ENCODE measurements at regions of chr18 and their contacts with region 1.

Region 1: DNA sequence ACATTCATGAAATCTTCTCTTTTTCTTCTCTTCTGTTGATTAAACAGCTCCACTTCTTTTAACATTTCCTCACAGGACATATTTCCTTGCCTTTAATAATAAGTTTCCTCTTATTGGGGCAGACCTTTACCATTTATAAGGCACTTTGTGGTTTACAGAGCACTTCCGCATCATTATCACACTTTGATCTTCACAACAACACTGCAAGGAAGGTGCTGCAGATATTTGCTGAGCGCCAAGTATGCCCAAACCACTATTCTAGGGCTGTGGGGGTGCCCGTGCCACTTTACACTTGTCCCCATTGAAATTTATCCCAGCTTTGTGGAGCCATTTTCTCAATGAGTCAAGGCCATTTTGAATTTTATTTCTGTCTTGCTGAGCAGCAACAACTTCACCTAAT is 246.6 kb downstream of the SS18 start:
- DNase-seq: no peak
- H3K4me3 ChIP-seq: no peak overlapping the region
- H3K27ac ChIP-seq: no peak overlapping the region
- H3K4me1 ChIP-seq: no peaks in the 10 kb centered on the region
- H3K27me3 ChIP-seq: no peaks in the 10 kb centered on the region
- CTCF ChIP-seq: no peak
- POLR2A ChIP-seq: no peak

Region 2: DNA sequence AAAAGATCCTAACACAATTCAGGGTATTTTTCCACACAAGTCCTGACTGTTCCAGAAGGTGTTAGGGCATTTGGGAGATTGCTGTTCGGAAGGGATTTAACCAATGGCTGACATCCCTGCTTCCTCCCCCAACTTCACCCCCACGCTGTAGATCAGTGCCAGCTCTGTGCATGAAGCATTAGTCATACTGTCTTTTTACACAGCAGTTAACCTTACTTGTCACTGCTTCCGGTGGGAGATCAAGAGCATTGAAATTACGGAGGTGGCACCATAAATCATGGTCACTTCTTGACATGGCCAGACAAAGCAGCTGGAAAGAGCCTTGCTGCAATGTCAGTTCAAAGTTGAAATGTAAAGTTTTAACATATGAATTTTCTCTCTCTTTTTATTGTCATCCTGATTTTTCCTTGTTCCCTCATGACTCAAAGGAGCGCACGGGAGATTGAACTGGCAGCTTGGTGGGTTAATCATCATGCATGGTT is 1313.1 kb before region 1 on chr18:
- intact Hi-C with region 1: loop called in 1 of 2 experiments (anchors 10 kb)
- DNase-seq: peak; percentile 20 to 56 (median 45)
- H3K4me3 ChIP-seq: no peak overlapping the region
- H3K27ac ChIP-seq: no peak overlapping the region
- H3K4me1 ChIP-seq: peaks cover 0 to 7% of the 10 kb centered on the region in 2 donors
- H3K27me3 ChIP-seq: peaks cover 9% of the 10 kb centered on the region
- CTCF ChIP-seq: no peak
- POLR2A ChIP-seq: no peak

Region 3: GRCh38 chr18:25446972-25447371 is 396.8 kb before region 1 on chr18:
- intact Hi-C with region 1: no loop called
- DNase-seq: no peak
- H3K4me3 ChIP-seq: no peak overlapping the region
- H3K27ac ChIP-seq: no peak overlapping the region
- H3K4me1 ChIP-seq: peaks cover 0 to 6% of the 10 kb centered on the region in 2 donors
- H3K27me3 ChIP-seq: no peaks in the 10 kb centered on the region
- CTCF ChIP-seq: no peak
- POLR2A ChIP-seq: no peak